Sigmoid colon (tissue), 7 donors: ENCODE measurements at regions of chrX and their contacts with region 1.

Region 1: DNA sequence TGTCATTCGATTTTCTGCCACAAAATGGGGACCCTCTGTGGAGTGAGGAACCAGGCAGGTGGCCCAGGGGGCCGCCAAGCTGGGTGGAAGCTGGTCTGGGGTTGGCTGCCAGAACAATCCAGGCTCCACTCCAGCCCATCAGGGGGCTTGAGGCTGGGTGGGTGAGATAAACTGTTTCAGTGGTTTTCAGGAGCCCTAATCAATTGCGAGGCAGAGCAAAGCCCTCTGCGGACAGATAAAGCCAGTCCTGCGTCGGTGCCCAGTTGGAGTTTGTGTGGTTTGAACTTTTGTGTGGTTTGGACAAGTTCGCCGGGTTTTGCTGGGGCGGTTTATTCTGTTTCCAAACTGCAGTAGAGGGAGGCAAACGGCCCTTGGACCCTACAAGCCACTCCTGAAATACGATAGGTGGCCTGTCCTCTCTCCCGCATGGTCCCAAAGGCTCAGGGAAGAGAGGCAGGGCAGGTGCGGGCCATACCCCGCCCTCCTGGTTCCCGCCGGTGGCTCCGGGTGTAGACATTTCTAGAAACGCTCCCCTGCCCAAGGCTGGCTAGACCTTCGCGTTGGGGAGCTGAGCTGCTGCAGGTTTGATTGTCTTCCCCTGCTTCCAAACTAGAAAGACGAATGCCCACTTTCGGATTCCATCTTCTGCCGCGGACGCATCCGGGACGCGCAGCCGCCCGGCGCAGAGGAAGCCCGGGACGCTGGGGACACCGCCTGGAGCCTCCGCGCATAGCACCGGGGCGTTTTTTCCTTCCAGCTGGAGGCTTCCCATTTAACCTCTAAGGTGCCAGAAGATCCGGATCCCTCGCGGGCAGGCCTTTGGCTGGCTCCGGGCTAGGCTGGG is 169.0 kb upstream of the BCOR start:
- DNase-seq: peak; percentile 83
- H3K4me3 ChIP-seq: peak overlapping the region; percentile 22 to 50 (median 46)
- H3K27ac ChIP-seq: peak overlapping the region; percentile 47 to 74 (median 67)
- H3K4me1 ChIP-seq: peaks cover 0 to 15% (median 4%) of the 10 kb centered on the region in 4 donors
- H3K27me3 ChIP-seq: peaks cover 0 to 3% (median 0%) of the 10 kb centered on the region in 3 donors
- CTCF ChIP-seq: peak in 3 of 4 experiments; percentile 52 to 60 (median 55)
- EP300 ChIP-seq: no peak
- POLR2A ChIP-seq: no peak

Region 2: GRCh38 chrX:39814391-39814790 is 452.3 kb before region 1 on chrX:
- intact Hi-C with region 1: loop called (anchors 5 kb)
- DNase-seq: no peak
- H3K4me3 ChIP-seq: no peak overlapping the region
- H3K27ac ChIP-seq: peak overlapping the region in 2 of 4 donors; percentile 43 to 44
- H3K4me1 ChIP-seq: peaks cover 0 to 6% (median 0%) of the 10 kb centered on the region in 4 donors
- H3K27me3 ChIP-seq: no peaks in the 10 kb centered on the region
- CTCF ChIP-seq: peak in 3 of 4 experiments; percentile 13 to 26 (median 23)
- EP300 ChIP-seq: no peak
- POLR2A ChIP-seq: no peak

Region 3: GRCh38 chrX:40068044-40068443 is 198.7 kb before region 1 on chrX:
- intact Hi-C with region 1: loop called (anchors 10 kb)
- DNase-seq: no peak
- H3K4me3 ChIP-seq: no peak overlapping the region
- H3K27ac ChIP-seq: no peak overlapping the region
- H3K4me1 ChIP-seq: peaks cover 0 to 7% (median 6%) of the 10 kb centered on the region in 4 donors
- H3K27me3 ChIP-seq: no peaks in the 10 kb centered on the region
- CTCF ChIP-seq: no peak
- EP300 ChIP-seq: no peak
- POLR2A ChIP-seq: no peak

Region 4: DNA sequence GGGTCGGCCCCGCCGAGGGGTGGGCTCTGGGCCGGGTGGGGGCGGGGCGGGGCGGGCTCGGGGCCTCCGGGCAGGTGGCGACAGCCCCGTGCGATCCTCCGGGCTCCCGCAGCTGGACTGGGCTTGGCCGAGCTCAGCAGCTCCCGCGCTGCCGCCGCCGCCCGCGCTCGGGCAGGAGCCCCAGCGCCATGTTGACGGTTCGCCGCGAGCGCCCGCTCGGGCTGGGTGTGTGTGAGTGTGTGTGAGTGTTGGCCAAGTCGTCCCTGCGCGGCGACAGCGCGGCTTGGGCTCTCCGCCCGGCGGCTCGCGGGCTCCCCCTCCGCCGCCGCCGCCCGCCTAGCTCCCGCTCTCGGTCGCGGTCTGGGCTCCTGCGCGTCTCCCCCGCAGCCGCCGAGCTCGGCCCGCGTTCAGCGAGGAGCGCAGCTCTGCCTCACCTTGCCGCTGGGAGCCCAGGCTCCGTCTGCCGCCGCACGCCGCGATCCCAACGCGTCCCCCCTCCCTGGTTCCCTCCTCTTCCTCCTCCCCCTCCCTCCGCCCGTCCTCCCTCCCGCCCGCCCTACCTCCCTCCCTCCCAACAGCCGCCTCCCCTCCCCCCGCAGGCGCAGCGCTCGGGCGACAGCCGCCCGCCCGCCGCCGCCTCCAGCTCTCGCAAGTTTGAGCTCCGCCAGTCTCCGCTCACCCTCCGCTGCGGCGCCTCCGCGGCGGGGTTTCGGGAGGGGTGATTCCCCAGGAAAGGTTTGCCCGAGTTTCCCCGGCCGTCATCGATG is 169.0 kb before region 1 on chrX and contains the start of gene BCOR:
- intact Hi-C with region 1: loop called (anchors 10 kb)
- DNase-seq: peak; percentile 90
- H3K4me3 ChIP-seq: peak within 1 kb of the TSS; percentile 56 to 80 (median 69)
- H3K27ac ChIP-seq: peak within 1 kb of the TSS; percentile 87 to 96 (median 92)
- H3K4me1 ChIP-seq: peaks cover 0 to 81% (median 26%) of the 10 kb centered on the region in 4 donors
- H3K27me3 ChIP-seq: peaks cover 0 to 21% (median 0%) of the 10 kb centered on the region in 3 donors
- CTCF ChIP-seq: no peak
- EP300 ChIP-seq: no peak
- POLR2A ChIP-seq: peak in 1 of 2 donors; percentile 22
- total RNA-seq, gene BCOR: 15.8 to 31.6 (median 23.0) TPM

Region 5: DNA sequence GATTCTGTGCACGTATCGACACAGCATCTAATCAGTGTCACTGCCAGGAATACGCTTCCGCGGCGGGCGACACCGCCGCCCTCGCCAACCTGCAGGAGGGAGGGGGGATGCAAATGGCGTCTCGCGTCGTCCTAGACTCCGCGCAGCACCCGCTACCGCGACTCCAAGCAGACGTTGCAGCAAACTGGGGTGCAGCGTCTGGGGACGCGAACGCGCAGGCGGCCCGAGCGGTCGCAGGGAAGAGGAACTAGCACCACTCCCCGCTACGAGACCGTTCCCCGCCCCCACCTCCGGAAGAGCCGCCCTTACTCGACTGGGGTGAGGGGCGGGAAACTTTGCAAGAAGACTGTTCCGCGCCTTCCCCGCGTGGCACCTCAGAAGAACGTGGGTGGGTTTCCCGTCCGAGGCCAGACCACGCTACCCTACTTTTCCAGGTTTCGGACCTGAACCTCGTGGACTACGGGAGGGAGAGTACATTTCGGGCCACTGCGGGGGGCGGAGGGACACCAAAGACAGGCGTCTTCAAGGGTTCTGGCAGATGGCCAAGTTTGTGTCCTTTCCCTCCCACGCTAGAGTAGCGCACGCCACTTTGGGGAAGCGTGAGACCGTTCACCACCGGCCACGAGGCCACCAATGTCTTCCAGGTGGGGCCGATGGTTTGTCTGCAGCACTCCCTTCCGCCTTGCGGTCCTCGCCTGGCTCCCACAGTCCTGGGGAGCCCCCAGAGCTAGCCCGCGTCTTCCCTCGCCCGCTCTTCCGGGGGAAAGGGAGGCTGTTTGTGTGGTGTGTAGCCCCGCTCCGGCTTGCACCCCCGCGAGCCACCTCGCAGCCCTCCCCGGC is 91.0 kb before region 1 on chrX:
- intact Hi-C with region 1: loop called (anchors 2 kb)
- DNase-seq: peak; percentile 89
- H3K4me3 ChIP-seq: peak overlapping the region; percentile 38 to 63 (median 56)
- H3K27ac ChIP-seq: peak overlapping the region; percentile 91 to 97 (median 93)
- H3K4me1 ChIP-seq: peaks cover 0 to 46% (median 26%) of the 10 kb centered on the region in 4 donors
- H3K27me3 ChIP-seq: peaks cover 0 to 5% (median 0%) of the 10 kb centered on the region in 3 donors
- CTCF ChIP-seq: no peak
- EP300 ChIP-seq: no peak
- POLR2A ChIP-seq: no peak

Region 6: GRCh38 chrX:40406330-40406859 is 139.7 kb after region 1 on chrX:
- intact Hi-C with region 1: no loop called
- DNase-seq: no peak
- H3K4me3 ChIP-seq: no peak overlapping the region
- H3K27ac ChIP-seq: no peak overlapping the region
- H3K4me1 ChIP-seq: peaks cover 0 to 8% (median 6%) of the 10 kb centered on the region in 4 donors
- H3K27me3 ChIP-seq: no peaks in the 10 kb centered on the region
- CTCF ChIP-seq: no peak
- EP300 ChIP-seq: no peak
- POLR2A ChIP-seq: no peak